ENCODE measurements at regions of chr1 and their contacts with region 1.

Region 1: DNA sequence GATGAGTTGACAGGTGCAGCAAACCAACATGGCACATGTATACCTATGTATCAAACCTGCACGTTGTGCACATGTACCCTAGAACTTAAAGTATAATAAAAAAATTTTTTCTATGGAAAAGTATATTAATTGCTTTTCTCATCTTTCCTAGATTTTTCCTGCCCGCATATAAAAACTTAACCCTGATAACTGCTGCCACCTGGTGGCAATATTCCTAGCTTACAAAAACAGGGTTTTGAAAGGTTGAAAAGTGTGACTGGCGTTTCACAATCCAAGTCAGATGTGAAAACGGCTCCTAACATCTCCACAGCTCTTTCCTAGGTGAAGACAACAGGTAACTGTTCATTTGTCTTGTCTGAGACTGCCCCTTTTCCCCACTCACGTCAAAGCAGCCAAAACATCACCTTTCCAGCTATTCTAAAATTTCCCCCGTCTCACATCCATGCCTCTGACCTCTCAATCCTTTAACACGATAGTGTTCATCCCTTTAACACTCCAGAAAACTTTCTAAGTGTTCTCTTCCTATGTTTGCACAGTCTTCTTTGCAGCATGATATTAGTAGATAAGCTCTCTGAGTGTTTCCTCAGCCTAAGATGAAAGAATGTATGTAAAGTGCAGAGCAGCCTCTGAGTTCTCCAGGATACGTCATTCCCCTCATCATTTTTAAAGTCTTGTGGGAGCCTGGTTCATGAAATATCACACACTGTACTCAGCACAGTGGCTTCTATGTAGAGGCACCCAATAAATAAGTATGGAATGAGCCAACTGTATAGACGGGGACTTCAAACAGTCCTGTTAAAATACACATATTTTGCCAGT is 27.5 kb downstream of the OVGP1 start:
- DNase-seq: peak; percentile 82
- H3K4me3 ChIP-seq: no peak overlapping the region
- H3K27ac ChIP-seq: no peak overlapping the region
- H3K4me1 ChIP-seq: peaks cover 6% of the 10 kb centered on the region
- H3K27me3 ChIP-seq: no peaks in the 10 kb centered on the region
- CTCF ChIP-seq: peak; percentile 75 to 79 (median 77)
- POLR2A ChIP-seq: no peak

Region 2: GRCh38 chr1:111222308-111223125 is 177.5 kb before region 1 on chr1:
- intact Hi-C with region 1: loop called (anchors 5 kb)
- DNase-seq: peak; percentile 87
- H3K4me3 ChIP-seq: no peak overlapping the region
- H3K27ac ChIP-seq: no peak overlapping the region
- H3K4me1 ChIP-seq: peaks cover 15% of the 10 kb centered on the region
- H3K27me3 ChIP-seq: no peaks in the 10 kb centered on the region
- CTCF ChIP-seq: peak; percentile 56 to 90 (median 82)
- POLR2A ChIP-seq: no peak

Measured in testis (tissue), 5 donors.